Motor neuron (in vitro differentiated cells): ENCODE measurements at regions of chr10 and their contacts with region 1.

Region 1: DNA sequence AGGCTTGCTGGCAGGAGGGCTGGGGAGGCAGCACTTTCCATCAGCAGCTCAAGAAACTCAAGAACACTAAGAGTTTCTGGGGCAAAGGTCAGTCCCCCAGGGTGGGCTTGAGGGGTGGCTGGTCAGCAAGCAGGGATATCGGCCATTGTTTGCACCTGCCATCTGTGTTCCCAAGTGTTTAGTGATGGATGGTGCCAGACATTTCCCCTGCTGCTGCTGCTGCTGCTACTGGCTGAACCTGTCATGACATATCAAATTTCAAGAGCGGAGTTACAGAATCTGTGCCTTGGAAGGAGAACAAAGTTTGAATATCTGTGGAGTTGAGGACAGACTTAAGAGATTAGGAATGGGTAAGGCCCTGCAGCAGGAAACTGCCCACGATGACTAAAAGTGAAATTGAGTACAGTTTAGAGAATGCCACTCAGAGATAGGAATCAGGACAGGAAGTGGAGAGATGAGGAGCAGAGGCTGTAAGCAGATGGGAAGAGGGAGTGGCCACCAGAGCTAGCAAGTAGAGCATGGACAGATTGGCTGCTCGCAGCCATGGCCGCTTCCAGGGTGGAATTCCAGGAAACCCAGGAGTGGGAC is 39.2 kb upstream of the PPP1R3C start:
- ATAC-seq: peak in 3 of 8 experiments; percentile 63 to 100 (median 99)
- H3K4me3 ChIP-seq: no peak overlapping the region
- H3K27ac ChIP-seq: peak overlapping the region in 1 of 2 donors; percentile 37
- H3K4me1 ChIP-seq: peaks cover 0 to 13% of the 10 kb centered on the region in 2 donors

Region 2: DNA sequence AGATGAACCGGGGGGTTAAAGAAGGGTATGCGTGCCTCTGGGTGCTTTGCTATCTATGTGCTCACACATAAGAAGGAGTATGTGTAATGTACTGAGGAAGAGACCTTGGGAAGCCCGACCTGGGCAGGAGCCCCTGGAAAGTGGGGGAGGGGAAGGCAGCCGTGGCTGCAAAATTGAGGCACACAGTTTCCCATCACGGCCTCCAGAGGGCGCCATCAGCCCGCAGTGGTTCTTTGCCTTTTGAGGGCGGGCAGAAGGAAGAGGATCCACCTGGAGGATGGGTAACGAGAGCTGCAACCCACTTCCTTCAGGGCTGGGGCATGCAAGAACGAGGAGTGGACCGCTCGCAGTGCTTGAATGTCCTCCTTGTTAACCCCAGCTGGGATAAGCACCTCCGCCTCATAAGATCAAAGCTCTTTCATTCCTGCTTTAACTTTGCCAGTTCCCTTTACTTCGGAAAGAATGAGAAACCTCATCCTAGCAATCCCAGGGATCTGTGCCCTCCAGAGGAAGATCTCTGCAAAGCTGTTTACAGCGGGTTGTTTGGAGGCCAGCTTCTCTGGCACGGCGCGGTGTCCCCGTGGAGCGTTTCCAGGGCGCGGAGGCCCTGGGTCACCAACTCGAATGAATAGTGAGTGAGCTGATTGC is 373.8 kb before region 1 on chr10:
- in situ Hi-C with region 1: loop called in 1 of 9 experiments (anchors 25 kb)
- ATAC-seq: peak; percentile 68 to 97 (median 87)
- H3K4me3 ChIP-seq: peak overlapping the region in 3 of 5 donors; percentile 7 to 22 (median 9)
- H3K27ac ChIP-seq: no peak overlapping the region
- H3K4me1 ChIP-seq: peaks cover 0 to 18% of the 10 kb centered on the region in 2 donors

Region 3: DNA sequence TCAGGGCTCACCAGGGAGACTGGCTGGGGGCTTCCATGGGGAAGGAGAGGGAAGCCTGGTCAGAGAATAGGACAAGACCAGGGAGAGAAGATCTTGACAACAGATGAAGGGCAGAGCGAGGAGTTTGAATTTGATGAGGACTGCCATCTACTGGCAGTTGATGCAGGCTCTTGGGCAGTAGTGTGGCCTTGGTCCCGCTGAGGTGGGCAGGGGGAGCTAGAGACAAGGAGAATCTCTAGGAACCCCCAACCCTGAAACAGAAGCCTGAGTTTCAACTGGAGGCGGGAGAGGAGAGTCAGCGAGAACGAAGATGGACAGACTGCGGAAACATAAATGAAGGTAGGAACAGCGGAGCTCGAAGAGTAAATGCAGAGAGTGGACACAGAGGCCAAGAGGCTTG is 120.3 kb before region 1 on chr10:
- in situ Hi-C with region 1: no loop called
- ATAC-seq: peak; percentile 63 to 95 (median 86)
- H3K4me3 ChIP-seq: no peak overlapping the region
- H3K27ac ChIP-seq: no peak overlapping the region
- H3K4me1 ChIP-seq: peaks cover 0 to 3% of the 10 kb centered on the region in 2 donors

Region 4: GRCh38 chr10:92839191-92840085 is 1167.3 kb after region 1 on chr10:
- in situ Hi-C with region 1: no loop called
- ATAC-seq: peak in 3 of 8 experiments; percentile 42 to 58 (median 57)
- H3K4me3 ChIP-seq: no peak overlapping the region
- H3K27ac ChIP-seq: no peak overlapping the region
- H3K4me1 ChIP-seq: no peaks in the 10 kb centered on the region